CD4-positive, alpha-beta memory T cell (primary cell): ENCODE measurements at regions of chr2 and their contacts with region 1.

Region 1: DNA sequence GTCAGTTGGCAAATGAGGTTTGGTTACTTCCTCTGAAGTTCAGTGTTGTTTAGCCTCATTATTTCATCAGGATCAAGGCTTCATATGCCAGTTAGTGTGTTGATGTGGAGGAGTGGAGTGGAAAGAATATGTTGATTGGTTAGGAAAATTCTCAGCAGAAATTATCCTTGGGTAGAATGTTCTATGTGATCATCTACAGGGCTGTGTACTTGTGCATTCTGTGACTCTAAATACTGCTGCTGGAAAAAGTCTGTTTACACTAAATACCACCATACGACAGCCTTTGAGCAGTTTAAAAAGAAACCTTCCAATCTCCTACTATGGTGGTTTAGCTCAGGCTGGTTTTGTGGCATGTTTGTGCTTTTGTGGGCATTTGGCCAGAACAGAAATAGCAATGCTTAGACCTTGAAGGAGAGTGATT is 25.8 kb downstream of the CAB39 start:
- DNase-seq: no peak
- H3K4me3 ChIP-seq: no peak overlapping the region
- H3K4me3 Mint-ChIP-seq: peak overlapping the region in 6 of 8 donors; percentile 15 to 59 (median 48)
- H3K27ac ChIP-seq: peak overlapping the region; percentile 1
- H3K27ac Mint-ChIP-seq: peak overlapping the region; percentile 8 to 59 (median 54)
- H3K4me1 ChIP-seq: peaks cover 81% of the 10 kb centered on the region
- H3K4me1 Mint-ChIP-seq: peaks cover 59 to 85% (median 71%) of the 10 kb centered on the region in 4 donors
- H3K27me3 ChIP-seq: no peaks in the 10 kb centered on the region
- H3K27me3 Mint-ChIP-seq: no peaks in the 10 kb centered on the region

Region 2: GRCh38 chr2:230721712-230722111 is 16.7 kb before region 1 on chr2:
- CTCF ChIA-PET with region 1: no interaction called
- POLR2A ChIA-PET with region 1: interaction called, 4 read pairs
- intact Hi-C with region 1: loop called (anchors 2 kb)
- DNase-seq: peak in 4 of 5 donors; percentile 14 to 38 (median 23)
- H3K4me3 ChIP-seq: no peak overlapping the region
- H3K4me3 Mint-ChIP-seq: peak overlapping the region; percentile 49 to 80 (median 63)
- H3K27ac ChIP-seq: peak overlapping the region; percentile 34
- H3K27ac Mint-ChIP-seq: peak overlapping the region; percentile 14 to 86 (median 78)
- H3K4me1 ChIP-seq: peaks cover 98% of the 10 kb centered on the region
- H3K4me1 Mint-ChIP-seq: peaks cover 64 to 92% (median 80%) of the 10 kb centered on the region in 4 donors
- H3K27me3 ChIP-seq: no peaks in the 10 kb centered on the region
- H3K27me3 Mint-ChIP-seq: no peaks in the 10 kb centered on the region